Naive thymus-derived CD4-positive, alpha-beta T cell (primary cell): ENCODE measurements at regions of chr1 and their contacts with region 1.

Region 1: DNA sequence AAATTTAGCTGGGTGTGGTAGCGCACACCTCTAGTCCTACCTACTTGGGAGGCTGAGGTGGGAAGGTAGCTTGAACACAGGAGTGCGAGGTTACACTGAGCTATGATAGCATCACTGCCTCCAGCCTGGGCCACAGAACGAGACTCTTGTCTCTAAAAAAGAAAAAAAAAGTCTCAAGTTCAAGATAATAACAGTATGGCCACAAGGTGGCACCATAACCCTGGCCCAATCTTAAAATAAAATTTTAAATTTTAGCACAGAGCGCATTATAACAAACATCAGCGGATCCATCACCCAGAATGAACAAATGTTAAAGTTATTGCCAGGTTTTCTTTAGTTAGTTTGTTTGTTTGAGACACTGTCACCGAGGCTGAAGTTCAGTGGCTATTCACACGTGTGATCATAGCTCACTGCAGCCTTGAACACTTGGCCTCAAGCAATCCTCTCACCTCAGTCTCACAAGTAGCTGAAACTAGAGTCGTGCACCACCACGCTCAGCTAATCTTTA is 2.9 kb upstream of the HTR6 start:
- DNase-seq: peak in 6 of 9 donors; percentile 35 to 66 (median 52)
- ATAC-seq: peak; percentile 63
- H3K4me3 ChIP-seq: no peak overlapping the region
- H3K4me3 Mint-ChIP-seq: peak overlapping the region in 2 of 10 donors; percentile 26 to 47
- H3K27ac ChIP-seq: no peak overlapping the region
- H3K27ac Mint-ChIP-seq: no peak overlapping the region
- H3K4me1 ChIP-seq: peaks cover 7 to 15% of the 10 kb centered on the region in 2 donors
- H3K4me1 Mint-ChIP-seq: peaks cover 12 to 37% (median 26%) of the 10 kb centered on the region in 7 donors
- H3K27me3 ChIP-seq: no peaks in the 10 kb centered on the region
- H3K27me3 Mint-ChIP-seq: peaks cover 0 to 34% (median 28%) of the 10 kb centered on the region in 5 donors

Region 2: GRCh38 chr1:19688041-19688842 is 26.5 kb after region 1 on chr1:
- CTCF ChIA-PET with region 1: interaction called, 7 read pairs
- POLR2A ChIA-PET with region 1: interaction called, 3 read pairs
- intact Hi-C with region 1: loop called in 1 of 2 experiments (anchors 1 kb)
- DNase-seq: peak in 6 of 9 donors; percentile 33 to 73 (median 66)
- ATAC-seq: peak; percentile 48
- H3K4me3 ChIP-seq: peak overlapping the region; percentile 6
- H3K4me3 Mint-ChIP-seq: peak overlapping the region in 9 of 10 donors; percentile 42 to 83 (median 69)
- H3K27ac ChIP-seq: peak overlapping the region; percentile 70
- H3K27ac Mint-ChIP-seq: peak overlapping the region in 8 of 9 donors; percentile 88 to 96 (median 93)
- H3K4me1 ChIP-seq: peaks cover 38 to 43% of the 10 kb centered on the region in 2 donors
- H3K4me1 Mint-ChIP-seq: peaks cover 4 to 53% (median 44%) of the 10 kb centered on the region in 7 donors
- H3K27me3 ChIP-seq: no peaks in the 10 kb centered on the region
- H3K27me3 Mint-ChIP-seq: no peaks in the 10 kb centered on the region

Region 3: GRCh38 chr1:19704247-19705113 is 42.7 kb after region 1 on chr1:
- CTCF ChIA-PET with region 1: interaction called, 101 read pairs
- POLR2A ChIA-PET with region 1: interaction called, 5 read pairs
- intact Hi-C with region 1: loop called (anchors 1 kb)
- DNase-seq: peak; percentile 18 to 72 (median 50)
- ATAC-seq: peak; percentile 80
- H3K4me3 ChIP-seq: no peak overlapping the region
- H3K4me3 Mint-ChIP-seq: no peak overlapping the region
- H3K27ac ChIP-seq: no peak overlapping the region
- H3K27ac Mint-ChIP-seq: peak overlapping the region in 2 of 9 donors; percentile 22 to 72
- H3K4me1 ChIP-seq: peaks cover 10 to 13% of the 10 kb centered on the region in 2 donors
- H3K4me1 Mint-ChIP-seq: peaks cover 0 to 25% (median 12%) of the 10 kb centered on the region in 7 donors
- H3K27me3 ChIP-seq: no peaks in the 10 kb centered on the region
- H3K27me3 Mint-ChIP-seq: no peaks in the 10 kb centered on the region

Region 4: DNA sequence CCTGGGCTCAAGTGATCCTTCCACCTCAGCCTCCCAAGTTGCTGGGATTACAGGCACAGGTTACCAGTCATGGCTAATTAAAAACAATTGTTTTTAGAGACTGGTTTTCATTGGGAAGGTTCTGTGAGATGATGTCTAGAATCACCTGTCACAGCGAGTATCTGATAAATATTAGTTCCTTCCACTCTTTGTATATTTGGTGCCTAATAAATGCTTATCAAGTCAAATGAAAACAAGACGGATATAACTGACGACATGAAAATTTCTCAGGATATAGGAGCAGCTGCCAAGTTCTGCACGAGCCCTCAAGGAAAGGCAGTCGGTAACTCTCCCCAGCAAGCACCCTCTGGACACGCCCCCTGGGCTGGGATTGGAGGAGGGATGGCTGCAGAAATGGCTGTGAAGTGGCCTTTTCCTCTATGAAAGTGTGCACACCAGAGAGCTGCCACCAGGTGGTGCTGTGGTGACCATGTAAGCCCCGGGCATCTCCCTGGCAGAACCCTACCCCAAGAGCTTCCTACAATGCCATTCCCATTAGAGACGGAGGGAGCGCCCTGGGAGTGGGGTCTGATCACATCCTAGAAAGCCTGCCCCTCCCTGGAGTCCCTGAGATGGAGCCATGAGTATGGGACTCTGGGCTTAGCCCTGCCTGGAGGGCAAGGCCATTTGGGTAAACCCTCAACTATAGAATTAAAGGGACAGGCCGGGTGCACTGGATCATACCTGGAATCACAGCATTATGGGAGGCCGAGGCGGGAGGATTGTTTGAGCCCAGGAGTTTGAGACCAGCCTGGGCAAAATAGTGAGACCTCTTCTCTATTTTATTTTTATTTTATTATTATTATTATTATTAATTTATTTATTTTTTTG is 53.8 kb after region 1 on chr1:
- CTCF ChIA-PET with region 1: interaction called, 9 read pairs
- POLR2A ChIA-PET with region 1: no interaction called
- intact Hi-C with region 1: loop called in 1 of 2 experiments (anchors 1 kb)
- DNase-seq: peak; percentile 55 to 83 (median 69)
- ATAC-seq: peak; percentile 99
- H3K4me3 ChIP-seq: no peak overlapping the region
- H3K4me3 Mint-ChIP-seq: no peak overlapping the region
- H3K27ac ChIP-seq: no peak overlapping the region
- H3K27ac Mint-ChIP-seq: no peak overlapping the region
- H3K4me1 ChIP-seq: peaks cover 0 to 9% of the 10 kb centered on the region in 2 donors
- H3K4me1 Mint-ChIP-seq: peaks cover 7 to 24% (median 13%) of the 10 kb centered on the region in 7 donors
- H3K27me3 ChIP-seq: no peaks in the 10 kb centered on the region
- H3K27me3 Mint-ChIP-seq: no peaks in the 10 kb centered on the region

Region 5: GRCh38 chr1:19811206-19811851 is 149.6 kb after region 1 on chr1:
- CTCF ChIA-PET with region 1: interaction called, 5 read pairs
- POLR2A ChIA-PET with region 1: no interaction called
- intact Hi-C with region 1: loop called (anchors 1 kb)
- DNase-seq: peak in 7 of 9 donors; percentile 10 to 53 (median 31)
- ATAC-seq: peak; percentile 68
- H3K4me3 ChIP-seq: no peak overlapping the region
- H3K4me3 Mint-ChIP-seq: no peak overlapping the region
- H3K27ac ChIP-seq: no peak overlapping the region
- H3K27ac Mint-ChIP-seq: peak overlapping the region in 1 of 9 donors; percentile 62
- H3K4me1 ChIP-seq: no peaks in the 10 kb centered on the region
- H3K4me1 Mint-ChIP-seq: no peaks in the 10 kb centered on the region
- H3K27me3 ChIP-seq: no peaks in the 10 kb centered on the region
- H3K27me3 Mint-ChIP-seq: peaks cover 0 to 6% (median 0%) of the 10 kb centered on the region in 5 donors

Region 6: DNA sequence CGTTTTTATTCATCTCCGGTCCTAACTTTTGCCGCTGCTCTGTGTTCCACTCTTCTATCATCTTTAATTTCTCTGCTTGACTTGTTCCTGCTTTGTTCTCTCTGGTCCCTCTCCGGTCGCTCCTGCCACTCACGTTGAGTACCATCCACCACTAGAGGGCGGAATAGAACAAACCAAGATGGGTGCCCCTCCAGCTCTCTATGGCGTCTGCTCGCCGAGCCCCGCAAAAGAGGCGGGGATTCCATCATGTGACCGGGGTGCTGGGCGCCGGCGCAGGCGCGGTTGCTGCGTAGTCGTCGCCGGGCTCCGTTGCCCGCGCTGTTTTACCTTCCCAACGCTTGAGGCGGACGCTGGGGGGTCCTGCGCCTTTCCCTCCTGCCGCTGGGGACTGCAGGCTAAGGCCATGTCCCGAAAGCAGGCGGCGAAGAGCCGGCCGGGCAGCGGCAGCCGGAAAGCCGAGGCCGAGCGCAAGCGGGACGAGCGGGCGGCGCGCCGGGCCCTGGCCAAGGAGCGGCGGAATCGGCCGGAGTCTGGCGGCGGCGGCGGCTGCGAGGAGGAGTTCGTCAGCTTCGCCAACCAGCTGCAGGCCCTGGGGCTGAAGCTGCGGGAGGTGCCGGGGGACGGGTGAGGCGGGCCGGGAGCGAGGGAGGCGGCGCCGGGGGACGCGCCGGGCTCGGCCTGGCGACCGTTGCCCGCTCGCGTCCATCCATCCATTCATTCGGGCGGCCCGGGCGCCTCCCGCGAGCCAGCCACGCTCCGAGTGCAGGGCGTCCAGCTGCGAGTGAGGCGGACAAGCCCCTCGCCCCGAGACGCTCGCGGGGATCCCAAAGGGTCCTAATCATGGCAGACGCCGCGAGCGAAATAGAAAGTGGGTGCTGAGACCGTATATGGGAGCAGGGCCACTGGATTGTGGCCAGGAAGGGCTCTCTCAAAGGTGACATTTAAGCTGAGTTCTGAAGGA is 220.6 kb after region 1 on chr1 and contains the start of gene OTUD3:
- CTCF ChIA-PET with region 1: no interaction called
- POLR2A ChIA-PET with region 1: interaction called, 3 read pairs
- intact Hi-C with region 1: loop called in 1 of 2 experiments (anchors 5 kb)
- DNase-seq: peak; percentile 87 to 97 (median 96)
- ATAC-seq: peak; percentile 100
- H3K4me3 ChIP-seq: peak within 1 kb of the TSS; percentile 66
- H3K4me3 Mint-ChIP-seq: peak within 1 kb of the TSS; percentile 77 to 95 (median 88)
- H3K27ac ChIP-seq: peak within 1 kb of the TSS; percentile 82
- H3K27ac Mint-ChIP-seq: peak within 1 kb of the TSS; percentile 3 to 88 (median 75)
- H3K4me1 ChIP-seq: peaks cover 15 to 23% of the 10 kb centered on the region in 2 donors
- H3K4me1 Mint-ChIP-seq: peaks cover 20 to 50% (median 47%) of the 10 kb centered on the region in 7 donors
- H3K27me3 ChIP-seq: no peaks in the 10 kb centered on the region
- H3K27me3 Mint-ChIP-seq: peaks cover 0 to 15% (median 6%) of the 10 kb centered on the region in 5 donors
- total RNA-seq, gene OTUD3: 13.1 to 23.6 (median 20.8) TPM